Endothelial cell of umbilical vein (primary cell): ENCODE measurements at regions of chr11 and their contacts with region 1.

Region 1: GRCh38 chr11:9613118-9613829 is 39.8 kb downstream of the WEE1 start:
- DNase-seq: peak; percentile 99
- H3K4me3 ChIP-seq: peak overlapping the region in 2 of 3 experiments; percentile 16 to 43
- H3K27ac ChIP-seq: peak overlapping the region; percentile 100
- H3K4me1 ChIP-seq: peaks cover 36% of the 10 kb centered on the region
- H3K27me3 ChIP-seq: no peaks in the 10 kb centered on the region
- CTCF ChIP-seq: peak; percentile 95 to 96
- POLR2A ChIP-seq: no peak

Region 2: GRCh38 chr11:8768625-8769333 is 844.5 kb before region 1 on chr11:
- CTCF ChIA-PET with region 1: no interaction called
- POLR2A ChIA-PET with region 1: no interaction called
- dilution Hi-C with region 1: no loop called
- intact Hi-C with region 1: no loop called
- DNase-seq: no peak
- H3K4me3 ChIP-seq: no peak overlapping the region
- H3K27ac ChIP-seq: no peak overlapping the region
- H3K4me1 ChIP-seq: peaks cover 22% of the 10 kb centered on the region
- H3K27me3 ChIP-seq: no peaks in the 10 kb centered on the region
- CTCF ChIP-seq: peak in 1 of 2 donors; percentile 8
- POLR2A ChIP-seq: no peak

Region 3: DNA sequence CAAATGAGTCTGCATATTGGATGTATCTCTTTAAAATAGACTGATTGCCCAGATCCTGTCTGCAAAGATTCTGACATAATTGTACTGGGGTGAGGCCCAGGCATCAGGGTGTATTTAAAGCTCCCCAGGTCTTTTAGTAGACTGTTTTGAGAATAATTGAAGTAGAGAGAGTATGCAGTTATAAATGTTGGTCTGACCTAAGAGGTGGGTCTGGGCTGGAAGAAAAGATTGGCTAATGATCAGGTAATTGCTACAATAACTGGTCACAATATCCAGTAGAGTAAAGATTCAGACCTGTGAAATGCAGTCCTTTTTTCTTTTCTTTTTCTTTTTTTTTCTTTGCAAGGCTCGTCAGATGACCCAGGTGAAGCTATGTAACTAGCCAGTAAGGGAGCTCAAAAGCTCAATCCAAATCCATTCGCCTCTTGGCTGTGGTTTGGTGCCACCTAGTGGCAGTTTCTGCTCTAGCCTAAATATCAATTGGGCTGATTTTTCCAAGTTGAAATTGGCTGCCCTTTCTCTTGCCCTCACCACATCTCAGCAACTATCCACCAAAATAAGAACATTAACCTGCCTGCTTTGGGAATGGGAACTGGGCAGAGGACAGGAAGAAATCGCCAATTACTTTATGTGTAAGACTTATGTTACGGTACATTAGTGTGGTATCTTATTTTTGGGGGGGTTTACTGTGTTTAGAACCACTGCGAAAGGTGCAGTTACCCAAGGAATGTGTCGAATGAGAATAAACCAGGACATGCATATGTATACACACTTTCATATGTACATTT is 106.6 kb before region 1 on chr11:
- CTCF ChIA-PET with region 1: interaction called, 9 read pairs
- POLR2A ChIA-PET with region 1: no interaction called
- dilution Hi-C with region 1: no loop called
- intact Hi-C with region 1: loop called (anchors 1 kb)
- DNase-seq: peak; percentile 84
- H3K4me3 ChIP-seq: no peak overlapping the region
- H3K27ac ChIP-seq: no peak overlapping the region
- H3K4me1 ChIP-seq: no peaks in the 10 kb centered on the region
- H3K27me3 ChIP-seq: no peaks in the 10 kb centered on the region
- CTCF ChIP-seq: peak; percentile 69 to 88
- POLR2A ChIP-seq: no peak

Region 4: DNA sequence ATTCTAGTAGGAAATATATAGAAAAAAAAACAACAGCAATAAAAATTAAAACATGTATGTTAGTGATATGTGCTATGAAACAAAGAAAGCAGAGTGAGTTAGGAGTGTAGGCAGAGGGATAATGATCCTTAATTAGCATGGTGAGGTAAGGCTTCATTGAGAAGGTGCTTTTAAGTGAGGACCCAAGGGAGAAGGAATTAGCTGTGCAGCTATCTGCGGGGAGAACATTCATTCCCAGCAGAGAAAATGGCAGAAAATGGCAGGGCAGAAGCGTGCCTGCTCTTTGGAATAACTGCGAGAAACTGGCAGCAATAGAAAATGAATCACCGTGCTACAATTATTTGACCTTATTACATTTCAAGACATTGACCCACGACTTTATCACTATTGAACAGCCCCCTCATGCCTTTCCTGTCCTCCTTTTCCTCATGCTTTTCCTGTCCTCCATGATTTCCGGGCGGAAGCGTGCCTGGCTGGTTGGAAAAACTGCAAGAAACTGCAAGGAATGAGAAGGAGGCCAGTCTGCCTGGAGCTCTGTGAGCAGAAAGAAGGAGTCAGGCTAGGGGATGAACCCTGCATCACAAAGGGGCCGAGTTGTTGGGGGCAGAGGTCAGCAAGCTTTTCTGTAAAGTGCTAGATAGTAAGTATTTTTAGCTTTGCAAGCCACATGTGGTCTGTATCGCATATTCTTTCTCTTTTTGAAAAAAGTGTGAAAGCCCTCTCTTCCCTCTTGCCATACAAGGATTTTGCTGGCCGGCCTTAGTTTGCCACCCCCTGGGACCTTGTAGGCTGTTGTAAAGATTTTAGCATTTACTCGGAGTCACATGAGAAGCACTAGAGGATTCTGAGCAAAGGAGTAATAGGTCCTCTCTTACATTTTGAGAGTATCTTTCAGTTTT is 13.5 kb after region 1 on chr11:
- CTCF ChIA-PET with region 1: interaction called, 13 read pairs
- POLR2A ChIA-PET with region 1: no interaction called
- dilution Hi-C with region 1: no loop called
- intact Hi-C with region 1: loop called (anchors 1 kb)
- DNase-seq: peak; percentile 96
- H3K4me3 ChIP-seq: peak overlapping the region in 1 of 3 experiments; percentile 19
- H3K27ac ChIP-seq: peak overlapping the region; percentile 96
- H3K4me1 ChIP-seq: peaks cover 33% of the 10 kb centered on the region
- H3K27me3 ChIP-seq: no peaks in the 10 kb centered on the region
- CTCF ChIP-seq: no peak
- POLR2A ChIP-seq: peak; percentile 84

Region 5: GRCh38 chr11:9716275-9717039 is 103.2 kb after region 1 on chr11:
- CTCF ChIA-PET with region 1: interaction called, 16 read pairs
- POLR2A ChIA-PET with region 1: no interaction called
- dilution Hi-C with region 1: no loop called
- intact Hi-C with region 1: loop called (anchors 1 kb)
- DNase-seq: peak; percentile 97
- H3K4me3 ChIP-seq: no peak overlapping the region
- H3K27ac ChIP-seq: peak overlapping the region; percentile 94
- H3K4me1 ChIP-seq: peaks cover 64% of the 10 kb centered on the region
- H3K27me3 ChIP-seq: no peaks in the 10 kb centered on the region
- CTCF ChIP-seq: no peak
- POLR2A ChIP-seq: no peak

Region 6: DNA sequence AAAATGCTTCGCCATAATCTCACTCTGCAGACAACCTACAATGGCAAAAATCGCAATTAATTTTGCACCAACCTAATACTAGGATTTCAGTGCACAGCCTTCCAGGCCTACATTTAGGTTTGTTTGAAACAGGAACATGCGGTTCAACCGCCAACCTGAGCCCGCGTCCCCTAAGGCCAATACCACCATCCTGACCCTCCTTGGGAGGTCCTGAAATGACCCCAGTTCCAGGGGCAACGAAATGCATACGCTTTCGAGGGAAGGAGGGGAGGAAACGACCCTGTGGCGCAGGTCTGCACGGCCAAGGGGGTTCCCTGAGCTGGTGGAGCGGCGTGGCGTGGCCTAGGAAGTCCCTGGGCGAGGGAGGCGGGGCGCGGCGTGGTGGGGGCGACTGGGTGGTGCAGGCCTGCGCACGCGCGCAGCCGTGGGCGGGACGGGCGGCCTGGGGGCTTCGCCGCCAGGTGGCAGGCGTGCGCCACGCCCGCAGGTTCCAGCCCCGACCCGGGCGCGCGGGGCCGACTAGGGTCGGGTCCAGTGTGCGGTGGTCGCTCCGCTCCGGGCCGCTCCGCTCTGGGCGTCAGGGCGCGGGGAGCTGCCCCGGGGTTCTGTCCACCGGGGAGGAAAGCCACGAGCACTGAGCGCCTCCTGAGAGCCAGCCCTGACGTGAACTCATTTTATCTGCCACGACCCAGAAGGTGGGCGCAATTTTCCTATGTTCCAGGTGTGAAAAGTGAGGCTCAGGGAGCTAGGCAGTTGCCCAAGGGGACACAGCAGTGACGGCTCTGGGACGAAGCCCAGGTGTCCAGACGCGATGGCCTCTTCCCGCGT is 144.7 kb after region 1 on chr11:
- CTCF ChIA-PET with region 1: interaction called, 5 read pairs
- POLR2A ChIA-PET with region 1: no interaction called
- dilution Hi-C with region 1: no loop called
- intact Hi-C with region 1: loop called (anchors 2 kb)
- DNase-seq: peak; percentile 77
- H3K4me3 ChIP-seq: peak overlapping the region in 2 of 3 experiments; percentile 33 to 37
- H3K27ac ChIP-seq: peak overlapping the region; percentile 67
- H3K4me1 ChIP-seq: peaks cover 34% of the 10 kb centered on the region
- H3K27me3 ChIP-seq: no peaks in the 10 kb centered on the region
- CTCF ChIP-seq: peak; percentile 67 to 92
- POLR2A ChIP-seq: peak; percentile 85

Region 7: DNA sequence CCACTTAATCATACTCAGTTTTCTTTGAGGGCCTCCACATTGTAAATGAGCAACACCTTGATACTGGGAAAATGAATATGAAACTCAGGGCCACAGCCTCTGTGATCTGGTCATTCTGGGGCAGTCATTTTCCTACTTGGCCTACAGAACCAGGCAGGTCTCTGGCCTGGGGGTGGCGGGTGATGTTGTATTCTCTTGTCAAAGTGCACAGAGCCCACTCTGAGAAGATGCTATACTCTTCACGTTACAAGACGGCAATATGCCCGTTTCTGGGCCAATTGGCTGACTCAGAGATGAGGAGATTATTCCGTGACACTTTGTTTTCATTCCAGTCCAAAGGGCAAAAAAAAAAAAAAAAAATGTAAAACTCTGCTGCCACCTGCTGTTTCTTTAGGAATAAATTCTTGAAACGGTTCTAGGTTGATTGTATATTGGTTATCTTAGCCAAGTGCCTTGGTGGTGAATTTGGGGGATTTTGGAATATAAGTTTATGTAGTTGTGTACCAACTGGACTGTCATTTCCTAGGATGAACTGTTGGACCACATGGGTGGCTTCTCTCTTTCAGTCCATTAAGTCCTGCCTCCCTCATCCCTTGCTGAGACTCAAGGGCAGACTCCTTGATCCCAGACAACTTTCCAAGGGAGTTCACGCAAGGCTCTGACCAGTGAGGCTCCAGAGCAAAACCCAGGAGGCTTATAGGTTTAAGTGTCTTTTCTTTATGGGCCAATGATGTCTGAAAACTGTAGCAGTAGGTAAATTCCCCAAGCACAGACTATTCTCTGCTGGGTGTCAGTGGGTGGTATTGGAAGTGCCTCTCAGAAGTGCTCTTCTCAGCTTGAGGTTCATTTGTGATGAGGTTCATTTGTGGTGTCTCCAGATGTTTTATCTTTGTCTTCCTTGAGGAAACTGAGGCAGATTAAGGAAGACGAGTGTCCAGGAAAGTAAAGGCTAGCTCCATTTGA is 709.8 kb after region 1 on chr11:
- CTCF ChIA-PET with region 1: no interaction called
- POLR2A ChIA-PET with region 1: no interaction called
- dilution Hi-C with region 1: no loop called
- intact Hi-C with region 1: loop called (anchors 2 kb)
- DNase-seq: peak; percentile 92
- H3K4me3 ChIP-seq: no peak overlapping the region
- H3K27ac ChIP-seq: peak overlapping the region; percentile 28
- H3K4me1 ChIP-seq: peaks cover 57% of the 10 kb centered on the region
- H3K27me3 ChIP-seq: no peaks in the 10 kb centered on the region
- CTCF ChIP-seq: peak; percentile 28 to 46
- POLR2A ChIP-seq: no peak